ENCODE measurements at regions of chr1 and their contacts with region 1.

Region 1: GRCh38 chr1:9942939-9943788 is at the starts of genes LZIC and NMNAT1:
- DNase-seq: peak; percentile 92
- ATAC-seq: peak; percentile 94
- H3K4me3 Mint-ChIP-seq: peak within 1 kb of the TSS; percentile 98
- H3K27ac Mint-ChIP-seq: peak within 1 kb of the TSS; percentile 98
- H3K4me1 Mint-ChIP-seq: peaks cover 30% of the 10 kb centered on the region
- H3K27me3 Mint-ChIP-seq: no peaks in the 10 kb centered on the region
- CTCF ChIP-seq: no peak
- total RNA-seq, gene LZIC: 19.3 and 20.9 TPM in 2 replicates
- total RNA-seq, gene NMNAT1: 5.8 and 7.5 TPM in 2 replicates

Region 2: GRCh38 chr1:9784508-9785133 is 158.5 kb before region 1 on chr1:
- CTCF ChIA-PET with region 1: interaction called, 3 read pairs
- POLR2A ChIA-PET with region 1: interaction called, 5 read pairs
- intact Hi-C with region 1: loop called (anchors 2 kb)
- DNase-seq: no peak
- ATAC-seq: peak; percentile 47
- H3K4me3 Mint-ChIP-seq: no peak overlapping the region
- H3K27ac Mint-ChIP-seq: no peak overlapping the region
- H3K4me1 Mint-ChIP-seq: peaks cover 33% of the 10 kb centered on the region
- H3K27me3 Mint-ChIP-seq: no peaks in the 10 kb centered on the region
- CTCF ChIP-seq: peak; percentile 68

Region 3: GRCh38 chr1:9910425-9911178 is 32.6 kb before region 1 on chr1:
- CTCF ChIA-PET with region 1: interaction called, 4 read pairs
- POLR2A ChIA-PET with region 1: interaction called, 11 read pairs
- intact Hi-C with region 1: loop called (anchors 1 kb)
- DNase-seq: no peak
- ATAC-seq: peak; percentile 90
- H3K4me3 Mint-ChIP-seq: peak overlapping the region; percentile 97
- H3K27ac Mint-ChIP-seq: peak overlapping the region; percentile 99
- H3K4me1 Mint-ChIP-seq: peaks cover 22% of the 10 kb centered on the region
- H3K27me3 Mint-ChIP-seq: no peaks in the 10 kb centered on the region
- CTCF ChIP-seq: no peak

Region 4: DNA sequence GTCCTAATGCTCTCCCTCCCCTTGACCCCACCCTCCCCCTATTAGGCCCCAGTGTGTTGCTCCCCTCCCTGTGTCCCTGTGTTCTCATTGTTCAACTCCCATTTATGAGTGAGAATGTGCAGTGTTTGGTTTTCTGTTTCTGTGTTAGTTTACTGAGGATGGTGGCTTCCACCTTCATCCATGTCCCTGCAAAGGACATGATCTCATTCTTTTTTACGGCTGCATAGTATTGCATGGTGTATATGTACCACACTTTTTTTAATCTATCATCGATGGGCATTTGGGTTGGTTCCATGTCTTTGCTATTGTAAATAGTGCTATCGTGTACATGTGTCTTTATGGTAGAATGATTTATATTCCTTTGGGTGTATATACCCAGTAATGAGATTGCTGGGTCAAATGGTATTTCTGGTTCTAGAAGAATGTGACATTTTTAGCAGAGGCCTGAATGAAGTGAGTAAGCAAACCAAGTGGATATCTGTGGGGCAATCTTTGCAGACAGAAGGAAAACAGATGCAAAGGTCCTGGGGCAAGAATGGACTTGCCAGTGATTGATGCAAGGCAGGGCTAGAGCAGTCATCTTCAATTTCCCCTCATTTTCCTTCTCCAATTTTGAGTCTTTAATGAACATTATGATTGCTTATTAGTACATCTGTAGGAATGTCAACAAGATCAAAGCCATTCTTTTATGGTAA is 139.8 kb after region 1 on chr1:
- CTCF ChIA-PET with region 1: no interaction called
- POLR2A ChIA-PET with region 1: no interaction called
- intact Hi-C with region 1: no loop called
- DNase-seq: no peak
- ATAC-seq: no peak
- H3K4me3 Mint-ChIP-seq: no peak overlapping the region
- H3K27ac Mint-ChIP-seq: no peak overlapping the region
- H3K4me1 Mint-ChIP-seq: no peaks in the 10 kb centered on the region
- H3K27me3 Mint-ChIP-seq: no peaks in the 10 kb centered on the region
- CTCF ChIP-seq: no peak

Region 5: DNA sequence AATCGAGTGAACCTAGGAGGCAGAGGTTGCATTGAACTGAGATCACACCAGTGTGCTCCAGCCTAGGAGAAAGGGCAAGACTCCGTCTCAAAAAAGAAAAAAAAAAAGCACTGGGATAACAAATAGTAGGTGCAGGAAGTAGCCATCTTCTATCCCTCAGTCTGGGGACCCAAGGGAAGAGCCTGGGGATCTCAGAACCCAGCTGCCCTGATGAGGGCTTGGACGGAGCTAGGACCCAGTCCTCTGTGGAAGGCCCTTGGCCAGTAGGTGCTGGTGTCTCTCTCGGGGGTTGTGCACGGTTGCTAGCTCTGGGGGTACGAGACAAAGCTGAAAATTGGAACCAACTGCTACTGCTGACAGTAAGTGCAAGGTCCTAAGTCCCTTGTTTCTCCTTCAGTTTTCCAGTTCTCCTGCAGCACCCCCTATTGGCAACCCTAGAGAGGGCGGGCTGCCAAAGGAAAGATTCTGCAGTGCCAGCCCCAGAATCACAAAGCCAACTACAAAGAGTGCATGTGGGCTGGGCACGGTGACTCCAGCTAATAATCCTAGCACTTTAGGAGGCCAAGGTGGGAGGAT is 209.6 kb after region 1 on chr1:
- CTCF ChIA-PET with region 1: no interaction called
- POLR2A ChIA-PET with region 1: no interaction called
- intact Hi-C with region 1: loop called (anchors 2 kb)
- DNase-seq: no peak
- ATAC-seq: no peak
- H3K4me3 Mint-ChIP-seq: no peak overlapping the region
- H3K27ac Mint-ChIP-seq: no peak overlapping the region
- H3K4me1 Mint-ChIP-seq: no peaks in the 10 kb centered on the region
- H3K27me3 Mint-ChIP-seq: no peaks in the 10 kb centered on the region
- CTCF ChIP-seq: no peak

Region 6: DNA sequence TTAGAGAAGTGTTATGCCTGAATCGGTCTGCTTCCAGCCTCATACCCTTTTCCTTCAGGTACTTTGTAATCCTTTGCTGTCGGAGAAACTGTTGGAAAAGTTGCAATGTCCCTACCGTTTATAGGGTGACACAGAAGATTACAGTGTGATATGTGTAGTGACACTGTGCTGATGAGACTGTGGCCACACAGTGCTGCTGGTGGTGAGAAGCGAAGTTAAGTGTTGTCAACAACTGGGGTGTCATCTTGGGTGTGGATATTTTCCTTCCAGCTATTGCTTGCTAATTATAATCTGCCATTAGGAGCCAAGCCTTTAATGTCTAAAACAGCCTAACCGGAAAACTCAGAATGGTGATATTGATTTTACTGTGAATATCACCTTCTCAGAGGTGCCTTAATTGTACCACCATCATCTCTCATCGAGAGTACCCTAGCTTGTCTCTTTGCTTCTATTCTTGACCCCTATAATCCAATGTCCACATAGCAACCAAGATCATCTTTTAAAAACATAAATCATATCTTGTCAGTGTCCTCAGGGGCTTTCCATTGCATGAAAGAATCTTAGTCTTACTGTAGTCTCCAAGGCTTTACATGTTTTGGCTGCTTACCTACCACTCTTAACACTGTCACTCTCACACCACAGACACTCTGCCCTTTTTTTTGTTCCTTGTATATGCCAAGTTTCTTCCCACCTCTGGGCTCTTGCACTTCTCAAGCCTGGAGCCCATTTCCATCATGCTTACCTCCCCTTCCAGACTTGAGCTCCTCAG is 366.3 kb after region 1 on chr1:
- CTCF ChIA-PET with region 1: no interaction called
- POLR2A ChIA-PET with region 1: no interaction called
- intact Hi-C with region 1: no loop called
- DNase-seq: no peak
- ATAC-seq: no peak
- H3K4me3 Mint-ChIP-seq: no peak overlapping the region
- H3K27ac Mint-ChIP-seq: no peak overlapping the region
- H3K4me1 Mint-ChIP-seq: no peaks in the 10 kb centered on the region
- H3K27me3 Mint-ChIP-seq: no peaks in the 10 kb centered on the region
- CTCF ChIP-seq: no peak

Region 7: DNA sequence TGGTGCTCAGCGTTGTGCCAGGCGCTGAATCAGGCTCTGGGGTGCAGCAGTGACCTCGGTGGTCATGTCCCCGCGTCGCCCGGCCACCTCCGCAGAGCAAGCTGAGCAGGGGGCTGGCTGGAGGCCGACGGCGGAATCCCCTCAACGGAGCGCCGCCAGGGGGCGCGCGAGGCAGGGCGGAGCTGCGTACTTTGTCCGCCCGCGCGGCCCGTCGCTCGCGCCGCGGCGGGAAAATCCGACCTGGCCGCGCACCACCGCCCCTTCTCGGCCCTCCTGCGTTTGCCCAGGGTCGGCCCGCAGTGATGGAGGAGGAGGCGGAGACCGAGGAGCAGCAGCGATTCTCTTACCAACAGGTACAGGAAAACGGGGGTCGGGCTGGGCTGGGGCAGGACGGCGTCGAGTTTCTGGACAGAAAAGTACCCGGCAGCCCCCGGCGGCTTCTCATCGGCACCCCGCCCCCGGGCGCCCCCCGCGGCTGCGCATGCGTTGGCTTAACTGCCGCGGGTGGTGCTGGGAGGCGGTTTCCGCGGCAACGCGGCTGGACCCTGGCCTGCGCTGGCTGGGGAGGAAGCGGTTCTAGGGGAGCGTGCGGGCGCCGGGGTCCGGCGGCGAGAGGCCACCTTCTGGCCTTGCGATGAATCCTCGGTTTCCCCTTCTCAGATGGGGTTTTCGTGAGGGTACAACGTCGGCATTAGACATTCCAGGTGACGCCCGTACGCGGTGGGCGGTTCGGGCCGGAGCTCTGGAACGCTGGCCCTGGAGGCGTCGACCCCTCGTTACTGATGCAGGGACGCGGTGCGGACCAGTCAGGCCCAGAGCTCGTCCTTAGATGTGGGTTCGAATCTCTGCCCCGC is 487.3 kb after region 1 on chr1 and contains the start of gene CENPS:
- CTCF ChIA-PET with region 1: interaction called, 3 read pairs
- POLR2A ChIA-PET with region 1: interaction called, 3 read pairs
- intact Hi-C with region 1: loop called (anchors 2 kb)
- DNase-seq: peak; percentile 91
- ATAC-seq: peak; percentile 86
- H3K4me3 Mint-ChIP-seq: peak within 1 kb of the TSS; percentile 92
- H3K27ac Mint-ChIP-seq: peak within 1 kb of the TSS; percentile 96
- H3K4me1 Mint-ChIP-seq: peaks cover 28% of the 10 kb centered on the region
- H3K27me3 Mint-ChIP-seq: no peaks in the 10 kb centered on the region
- CTCF ChIP-seq: peak; percentile 57
- total RNA-seq, gene CENPS: 9.2 and 15.2 TPM in 2 replicates

Measured in activated B cell treated with CpG ODN at 0.5 μM for 24 hours (primary cell).